Activated CD8-positive, alpha-beta T cell treated with anti-CD3 and anti-CD28 coated beads for 36 hours (primary cell): ENCODE measurements at regions of chr20 and their contacts with region 1.

Region 1: GRCh38 chr20:13261460-13262301 is 40.6 kb downstream of the ISM1 start:
- DNase-seq: peak; percentile 84
- ATAC-seq: peak; percentile 94
- H3K4me3 Mint-ChIP-seq: no peak overlapping the region
- H3K27ac Mint-ChIP-seq: no peak overlapping the region
- H3K4me1 Mint-ChIP-seq: peaks cover 10% of the 10 kb centered on the region
- H3K27me3 Mint-ChIP-seq: no peaks in the 10 kb centered on the region
- CTCF ChIP-seq: peak; percentile 76

Region 2: GRCh38 chr20:13119583-13119982 is 142.1 kb before region 1 on chr20:
- CTCF ChIA-PET with region 1: interaction called, 73 read pairs
- POLR2A ChIA-PET with region 1: no interaction called
- intact Hi-C with region 1: loop called (anchors 1 kb)
- DNase-seq: peak; percentile 31
- ATAC-seq: peak; percentile 83
- H3K4me3 Mint-ChIP-seq: no peak overlapping the region
- H3K27ac Mint-ChIP-seq: no peak overlapping the region
- H3K4me1 Mint-ChIP-seq: no peaks in the 10 kb centered on the region
- H3K27me3 Mint-ChIP-seq: peaks cover 1% of the 10 kb centered on the region
- CTCF ChIP-seq: peak; percentile 94

Region 3: GRCh38 chr20:13125486-13125885 is 136.2 kb before region 1 on chr20:
- CTCF ChIA-PET with region 1: interaction called, 73 read pairs
- POLR2A ChIA-PET with region 1: no interaction called
- intact Hi-C with region 1: no loop called
- DNase-seq: no peak
- ATAC-seq: no peak
- H3K4me3 Mint-ChIP-seq: no peak overlapping the region
- H3K27ac Mint-ChIP-seq: no peak overlapping the region
- H3K4me1 Mint-ChIP-seq: no peaks in the 10 kb centered on the region
- H3K27me3 Mint-ChIP-seq: no peaks in the 10 kb centered on the region
- CTCF ChIP-seq: no peak

Region 4: DNA sequence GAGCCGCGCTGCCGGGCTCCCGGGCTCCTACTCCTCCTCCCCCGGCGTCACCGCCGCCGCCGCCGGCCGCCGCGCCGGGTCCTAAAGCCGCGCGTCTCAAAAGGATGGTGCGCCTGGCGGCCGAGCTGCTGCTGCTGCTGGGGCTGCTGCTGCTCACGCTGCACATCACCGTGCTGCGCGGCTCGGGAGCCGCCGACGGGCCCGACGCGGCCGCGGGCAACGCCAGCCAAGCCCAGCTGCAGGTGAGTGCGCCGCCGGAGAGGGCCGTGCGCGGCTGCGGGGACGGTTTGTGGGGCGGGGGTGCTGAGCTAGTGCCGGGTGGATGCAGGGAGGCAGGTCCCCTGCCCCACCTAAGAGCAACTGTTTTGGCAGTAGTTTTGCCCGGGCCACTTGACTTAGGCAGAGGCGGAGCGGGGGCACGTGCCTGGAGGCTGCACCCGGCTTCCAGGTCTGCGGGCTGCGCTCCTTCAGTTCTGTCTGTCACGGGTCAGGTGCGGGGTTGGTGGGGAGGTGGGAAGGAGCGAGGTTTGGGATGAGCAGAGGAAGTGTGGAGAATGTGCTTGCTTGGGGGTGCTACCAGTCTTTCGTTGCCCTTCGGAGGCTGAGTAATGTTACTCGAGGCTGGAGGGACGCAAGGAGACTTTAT is 39.9 kb before region 1 on chr20:
- CTCF ChIA-PET with region 1: interaction called, 10 read pairs
- POLR2A ChIA-PET with region 1: interaction called, 5 read pairs
- intact Hi-C with region 1: loop called (anchors 5 kb)
- DNase-seq: peak; percentile 77
- ATAC-seq: peak; percentile 83
- H3K4me3 Mint-ChIP-seq: peak overlapping the region; percentile 76
- H3K27ac Mint-ChIP-seq: peak overlapping the region; percentile 36
- H3K4me1 Mint-ChIP-seq: peaks cover 16% of the 10 kb centered on the region
- H3K27me3 Mint-ChIP-seq: peaks cover 45% of the 10 kb centered on the region
- CTCF ChIP-seq: no peak

Region 5: GRCh38 chr20:13231031-13231752 is 30.5 kb before region 1 on chr20:
- CTCF ChIA-PET with region 1: interaction called, 4 read pairs
- POLR2A ChIA-PET with region 1: no interaction called
- intact Hi-C with region 1: loop called (anchors 5 kb)
- DNase-seq: peak; percentile 78
- ATAC-seq: peak; percentile 86
- H3K4me3 Mint-ChIP-seq: peak overlapping the region; percentile 19
- H3K27ac Mint-ChIP-seq: peak overlapping the region; percentile 91
- H3K4me1 Mint-ChIP-seq: peaks cover 41% of the 10 kb centered on the region
- H3K27me3 Mint-ChIP-seq: peaks cover 1% of the 10 kb centered on the region
- CTCF ChIP-seq: no peak

Region 6: GRCh38 chr20:13251106-13251903 is 10.4 kb before region 1 on chr20:
- CTCF ChIA-PET with region 1: interaction called, 30 read pairs
- POLR2A ChIA-PET with region 1: no interaction called
- intact Hi-C with region 1: no loop called
- DNase-seq: no peak
- ATAC-seq: no peak
- H3K4me3 Mint-ChIP-seq: no peak overlapping the region
- H3K27ac Mint-ChIP-seq: no peak overlapping the region
- H3K4me1 Mint-ChIP-seq: peaks cover 39% of the 10 kb centered on the region
- H3K27me3 Mint-ChIP-seq: no peaks in the 10 kb centered on the region
- CTCF ChIP-seq: no peak

Region 7: GRCh38 chr20:13292201-13292885 is 30.7 kb after region 1 on chr20:
- CTCF ChIA-PET with region 1: no interaction called
- POLR2A ChIA-PET with region 1: no interaction called
- intact Hi-C with region 1: no loop called
- DNase-seq: no peak
- ATAC-seq: no peak
- H3K4me3 Mint-ChIP-seq: no peak overlapping the region
- H3K27ac Mint-ChIP-seq: no peak overlapping the region
- H3K4me1 Mint-ChIP-seq: no peaks in the 10 kb centered on the region
- H3K27me3 Mint-ChIP-seq: no peaks in the 10 kb centered on the region
- CTCF ChIP-seq: no peak

Region 8: DNA sequence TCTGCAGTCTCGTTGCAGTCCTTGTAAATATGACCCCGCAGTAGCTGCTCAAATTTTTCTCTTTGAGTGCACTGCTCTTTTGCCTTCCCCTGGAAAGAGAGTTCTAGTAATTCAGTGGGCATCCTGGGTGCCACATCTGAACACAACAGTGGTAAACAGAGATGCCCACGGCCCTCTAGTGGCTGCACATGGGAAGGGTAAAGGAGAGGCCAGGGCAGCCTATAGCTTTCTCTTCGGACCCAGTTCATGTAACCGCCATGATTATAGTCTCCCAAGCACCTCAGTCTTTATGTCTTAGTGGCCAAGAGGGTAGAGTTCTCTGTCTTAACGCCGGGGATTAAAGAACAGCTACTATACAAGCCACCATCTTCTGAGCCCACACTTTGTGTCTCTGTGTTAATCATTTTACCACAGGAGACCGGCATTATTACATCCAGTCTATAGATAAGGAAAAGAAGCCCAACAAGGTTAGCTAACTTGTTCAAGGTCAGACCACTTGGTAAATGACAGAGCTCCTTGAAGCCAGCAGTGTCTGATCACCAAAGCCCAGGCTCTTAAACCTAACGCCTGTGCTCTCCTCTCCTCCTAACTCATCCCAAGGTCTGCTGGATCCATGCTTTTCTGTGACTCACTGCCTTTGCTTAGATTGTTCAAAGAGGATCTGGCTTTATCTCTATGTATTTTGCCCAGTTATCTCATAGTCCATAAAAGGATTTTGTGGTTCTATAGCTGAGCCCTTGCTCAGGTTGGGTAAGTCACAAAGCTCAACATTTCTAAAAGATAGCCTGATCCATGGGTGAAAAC is 41.2 kb after region 1 on chr20:
- CTCF ChIA-PET with region 1: interaction called, 13 read pairs
- POLR2A ChIA-PET with region 1: no interaction called
- intact Hi-C with region 1: no loop called
- DNase-seq: peak; percentile 69
- ATAC-seq: peak; percentile 90
- H3K4me3 Mint-ChIP-seq: no peak overlapping the region
- H3K27ac Mint-ChIP-seq: no peak overlapping the region
- H3K4me1 Mint-ChIP-seq: no peaks in the 10 kb centered on the region
- H3K27me3 Mint-ChIP-seq: peaks cover 4% of the 10 kb centered on the region
- CTCF ChIP-seq: peak; percentile 64

Region 9: DNA sequence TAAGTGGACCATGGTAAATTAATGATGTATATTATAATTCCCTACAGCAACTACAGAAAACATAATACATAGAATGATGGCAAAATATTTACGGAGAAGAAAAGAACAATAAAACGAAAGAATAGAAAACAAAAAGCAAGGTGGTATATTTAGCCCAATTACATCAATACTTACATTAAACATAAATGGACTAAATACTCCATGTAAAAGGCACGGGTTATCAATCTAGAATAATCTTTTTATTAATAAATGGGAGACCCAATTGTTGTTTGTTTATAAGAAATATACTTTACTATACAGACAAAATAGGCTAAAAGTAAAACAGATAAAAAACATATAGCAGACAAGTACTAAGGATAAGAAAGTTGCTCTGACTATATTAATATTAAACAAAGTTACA is 239.8 kb after region 1 on chr20:
- CTCF ChIA-PET with region 1: no interaction called
- POLR2A ChIA-PET with region 1: no interaction called
- intact Hi-C with region 1: no loop called
- DNase-seq: no peak
- ATAC-seq: no peak
- H3K4me3 Mint-ChIP-seq: no peak overlapping the region
- H3K27ac Mint-ChIP-seq: no peak overlapping the region
- H3K4me1 Mint-ChIP-seq: no peaks in the 10 kb centered on the region
- H3K27me3 Mint-ChIP-seq: no peaks in the 10 kb centered on the region
- CTCF ChIP-seq: no peak